AG04449 (cell line): ENCODE measurements at regions of chr6 and their contacts with region 1.

Region 1: DNA sequence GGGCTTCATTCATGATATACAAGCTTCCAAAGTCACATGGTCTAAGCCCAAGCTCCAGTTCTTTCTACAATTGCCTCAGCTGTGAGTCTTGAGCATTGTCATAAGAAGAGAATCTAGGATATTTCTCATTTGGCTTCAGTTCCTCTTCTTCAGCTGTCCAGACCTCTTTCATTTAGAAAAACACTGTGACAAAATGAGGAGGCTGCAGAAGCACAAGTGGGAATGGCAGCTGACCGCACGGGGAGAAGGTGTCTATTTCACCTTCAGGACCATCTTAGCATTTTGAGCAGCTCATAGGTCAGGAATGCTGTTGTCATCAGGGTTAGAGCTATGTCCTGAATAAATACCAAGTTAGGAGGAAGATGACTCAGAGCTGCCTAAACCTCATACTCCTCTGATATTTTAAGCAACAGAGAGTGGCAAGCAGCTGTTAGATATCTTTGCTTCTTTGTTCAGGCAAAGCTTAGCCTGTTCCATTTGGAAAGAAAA is 390.1 kb upstream of the CITED2 start:
- DNase-seq: peak; percentile 94
- H3K4me3 ChIP-seq: no peak overlapping the region
- CTCF ChIP-seq: no peak

Region 2: GRCh38 chr6:139655790-139656687 is 108.5 kb before region 1 on chr6:
- CTCF ChIA-PET with region 1: no interaction called
- POLR2A ChIA-PET with region 1: no interaction called
- DNase-seq: no peak
- H3K4me3 ChIP-seq: no peak overlapping the region
- CTCF ChIP-seq: no peak

Region 3: DNA sequence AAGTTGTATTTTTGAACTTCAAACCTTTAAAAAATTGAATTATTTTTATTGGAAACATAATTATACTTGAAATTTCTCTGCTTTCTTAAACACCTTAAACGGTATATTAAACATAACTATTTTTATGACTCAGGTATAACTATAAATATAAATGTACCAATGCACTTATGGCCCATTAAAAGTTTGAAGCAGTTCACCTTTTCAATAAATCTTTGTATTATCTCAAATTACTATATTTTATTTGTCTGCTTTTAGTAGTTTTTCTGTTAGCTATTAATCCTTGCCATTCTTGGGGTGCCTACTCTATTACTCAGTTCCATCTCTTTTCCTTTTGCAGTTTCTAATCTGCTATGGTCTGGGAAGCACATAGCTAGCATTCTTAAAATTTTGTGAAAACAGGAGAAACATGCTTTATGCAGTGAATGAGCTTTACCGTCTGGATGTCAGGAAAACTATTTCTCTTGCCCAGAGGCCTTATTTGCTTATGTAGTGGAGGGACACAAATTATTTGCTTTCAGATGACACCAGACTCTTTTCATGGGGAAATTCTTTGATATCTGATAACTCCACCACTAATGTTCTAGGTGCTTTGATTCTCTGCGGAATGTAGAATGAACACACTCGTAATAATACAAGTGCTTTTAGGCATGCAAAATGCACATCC is 11.2 kb before region 1 on chr6:
- CTCF ChIA-PET with region 1: no interaction called
- POLR2A ChIA-PET with region 1: interaction called, 13 read pairs
- DNase-seq: peak; percentile 83
- H3K4me3 ChIP-seq: no peak overlapping the region
- CTCF ChIP-seq: no peak

Region 4: DNA sequence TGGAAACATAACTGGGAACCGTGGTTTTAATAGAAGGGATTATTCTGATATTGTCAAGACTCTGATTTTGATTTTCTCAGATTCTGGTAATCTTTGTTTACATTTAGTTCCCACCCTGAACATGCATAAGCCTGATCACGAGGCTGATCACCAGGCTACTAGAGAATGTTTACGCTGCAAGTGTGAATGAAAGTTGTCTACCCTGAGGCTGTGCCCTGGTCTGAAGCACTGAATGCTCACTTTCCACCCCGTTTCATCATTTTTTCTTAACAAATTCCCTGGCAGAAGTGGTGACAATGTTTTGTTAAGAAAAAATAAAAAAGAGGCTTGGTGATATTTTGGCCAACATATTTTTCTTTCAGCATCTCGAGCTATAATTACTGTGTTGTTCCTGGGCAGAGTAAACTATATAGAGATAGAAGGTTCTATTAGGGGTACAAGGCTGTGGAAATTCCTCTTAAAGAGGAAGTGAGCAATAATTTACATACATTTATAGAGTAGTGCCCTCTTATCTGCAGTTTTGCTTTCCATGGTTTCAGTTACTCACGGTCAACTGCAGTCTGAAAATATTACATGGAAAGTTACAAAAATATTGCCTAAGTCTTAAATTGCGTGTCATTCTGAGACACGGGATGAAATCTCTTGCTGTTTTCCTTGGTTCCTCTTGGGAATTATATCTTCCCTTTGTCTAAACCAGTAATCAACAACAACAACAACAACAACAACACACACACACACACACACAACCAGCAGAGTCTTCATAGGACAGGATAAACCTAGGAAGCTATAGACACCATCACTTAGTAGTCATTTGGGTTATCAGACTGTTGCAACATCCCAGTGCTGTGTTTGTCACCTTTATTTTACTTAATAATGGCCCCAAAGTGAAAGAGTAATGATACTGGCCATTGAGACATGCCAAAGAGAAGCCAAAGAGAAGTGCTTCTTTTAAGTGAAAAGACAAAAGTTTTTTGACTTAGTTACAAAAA is 176.5 kb after region 1 on chr6:
- CTCF ChIA-PET with region 1: no interaction called
- POLR2A ChIA-PET with region 1: no interaction called
- DNase-seq: no peak
- H3K4me3 ChIP-seq: no peak overlapping the region
- CTCF ChIP-seq: no peak

Region 5: DNA sequence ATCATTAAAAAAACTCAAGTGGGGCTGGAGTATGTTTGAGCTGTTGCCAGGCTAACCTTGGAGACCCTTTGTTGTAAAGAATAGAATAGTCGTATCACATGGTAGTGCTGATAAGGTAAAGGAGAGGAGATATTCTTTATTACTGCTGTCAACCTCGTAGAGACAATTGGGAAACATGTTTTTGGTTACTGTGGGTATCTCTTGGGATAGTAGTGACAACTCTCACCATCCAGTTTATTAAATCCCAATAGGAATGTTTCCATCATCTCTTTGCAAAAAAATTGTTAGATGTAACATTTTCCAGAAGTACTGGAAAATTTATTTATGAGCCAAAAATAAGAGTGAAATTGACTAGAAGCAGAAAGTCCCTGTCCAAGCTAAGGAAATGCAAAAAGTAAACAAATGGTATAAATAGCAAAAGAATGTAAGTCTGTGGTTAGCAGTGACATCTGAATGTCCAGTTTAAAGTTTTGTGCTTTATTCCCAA is 439.2 kb after region 1 on chr6:
- CTCF ChIA-PET with region 1: no interaction called
- POLR2A ChIA-PET with region 1: no interaction called
- DNase-seq: no peak
- H3K4me3 ChIP-seq: no peak overlapping the region
- CTCF ChIP-seq: no peak